MCF 10A (cell line): ENCODE measurements at regions of chr10 and their contacts with region 1.

Region 1: DNA sequence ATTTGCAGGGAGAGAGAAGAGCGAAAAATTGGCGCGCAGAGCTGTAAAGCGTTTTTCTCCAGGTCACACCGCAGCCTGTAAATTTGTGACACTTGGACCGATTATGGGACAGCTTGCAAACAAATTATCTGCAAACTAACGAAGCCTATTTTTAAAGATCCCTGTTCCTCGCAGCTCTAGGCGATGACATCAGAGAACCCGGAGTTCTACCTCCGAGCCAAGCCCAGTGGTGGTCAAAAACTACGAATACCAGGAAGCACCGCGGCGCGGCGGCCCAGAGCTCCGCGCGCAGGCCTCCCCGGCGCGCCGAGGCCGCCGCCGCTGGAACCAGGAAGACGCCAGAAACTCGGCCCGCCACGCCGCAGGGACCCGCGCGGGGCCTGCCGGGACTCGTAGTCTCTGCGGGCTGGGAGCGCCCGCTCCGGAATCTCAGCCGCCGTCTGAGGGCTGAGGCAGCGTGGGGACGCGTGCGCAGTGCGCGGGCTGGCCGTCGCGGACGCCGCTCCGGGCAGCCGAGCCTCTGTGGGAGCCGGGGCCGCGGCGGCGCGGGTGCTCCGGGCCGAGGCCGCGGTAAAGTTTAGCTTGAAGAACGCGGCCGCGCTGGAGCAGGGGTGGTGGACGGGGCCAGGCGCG is at the start of gene PLEKHA1:
- DNase-seq: peak; percentile 93
- H3K4me3 Mint-ChIP-seq: peak within 1 kb of the TSS; percentile 93
- H3K27ac Mint-ChIP-seq: peak within 1 kb of the TSS; percentile 89
- H3K4me1 Mint-ChIP-seq: peaks cover 25% of the 10 kb centered on the region
- H3K27me3 Mint-ChIP-seq: no peaks in the 10 kb centered on the region
- CTCF ChIP-seq: peak; percentile 13
- total RNA-seq, gene PLEKHA1: 55.8 and 56.7 TPM in 2 replicates

Region 2: GRCh38 chr10:122298598-122299301 is 75.6 kb before region 1 on chr10:
- CTCF ChIA-PET with region 1: interaction called, 7 read pairs
- POLR2A ChIA-PET with region 1: interaction called, 9 read pairs
- intact Hi-C with region 1: loop called (anchors 2 kb)
- DNase-seq: peak; percentile 86
- H3K4me3 Mint-ChIP-seq: no peak overlapping the region
- H3K27ac Mint-ChIP-seq: no peak overlapping the region
- H3K4me1 Mint-ChIP-seq: peaks cover 38% of the 10 kb centered on the region
- H3K27me3 Mint-ChIP-seq: no peaks in the 10 kb centered on the region
- CTCF ChIP-seq: peak; percentile 82

Region 3: GRCh38 chr10:122323941-122324675 is 50.2 kb before region 1 on chr10:
- CTCF ChIA-PET with region 1: no interaction called
- POLR2A ChIA-PET with region 1: interaction called, 36 read pairs
- intact Hi-C with region 1: no loop called
- DNase-seq: peak; percentile 91
- H3K4me3 Mint-ChIP-seq: no peak overlapping the region
- H3K27ac Mint-ChIP-seq: peak overlapping the region; percentile 90
- H3K4me1 Mint-ChIP-seq: peaks cover 14% of the 10 kb centered on the region
- H3K27me3 Mint-ChIP-seq: no peaks in the 10 kb centered on the region
- CTCF ChIP-seq: no peak

Region 4: DNA sequence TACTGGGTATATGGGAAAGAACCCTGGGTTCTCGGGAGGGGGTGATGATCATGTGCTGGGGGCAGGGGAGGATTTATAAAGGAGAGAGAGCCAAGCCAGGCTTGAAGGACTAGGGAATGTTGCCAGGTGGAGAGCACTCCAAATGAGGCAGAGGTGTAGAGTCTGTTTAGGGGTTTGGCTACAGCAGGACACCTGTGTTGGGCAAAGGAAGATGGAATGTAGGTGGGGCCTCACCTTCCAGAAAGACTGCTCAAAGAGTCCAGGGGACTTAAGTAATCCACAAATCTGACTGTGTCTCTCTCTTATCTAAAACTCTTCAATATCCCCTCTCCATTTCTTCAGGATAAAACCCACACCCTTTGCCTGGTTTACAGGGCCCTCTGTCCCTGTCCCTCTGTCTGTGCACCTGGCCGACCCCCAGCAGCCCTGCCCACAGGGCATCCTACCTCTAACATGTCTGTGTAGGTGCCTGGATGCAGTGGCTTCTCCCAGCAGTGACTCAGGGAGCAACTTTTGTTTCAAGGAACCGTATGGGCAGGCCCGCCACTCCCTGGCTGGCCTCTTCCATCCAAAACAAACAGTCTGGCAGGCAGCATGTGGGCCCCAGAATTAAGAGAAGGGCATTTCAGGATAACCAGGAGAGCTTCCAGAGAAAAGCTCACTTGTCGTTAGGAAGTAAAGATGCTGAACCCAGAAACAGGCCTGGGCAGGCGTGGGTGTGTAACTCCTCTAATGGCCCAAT is 10.5 kb before region 1 on chr10:
- CTCF ChIA-PET with region 1: interaction called, 5 read pairs
- POLR2A ChIA-PET with region 1: interaction called, 22 read pairs
- intact Hi-C with region 1: no loop called
- DNase-seq: peak; percentile 56
- H3K4me3 Mint-ChIP-seq: no peak overlapping the region
- H3K27ac Mint-ChIP-seq: peak overlapping the region; percentile 49
- H3K4me1 Mint-ChIP-seq: peaks cover 17% of the 10 kb centered on the region
- H3K27me3 Mint-ChIP-seq: no peaks in the 10 kb centered on the region
- CTCF ChIP-seq: no peak

Region 5: DNA sequence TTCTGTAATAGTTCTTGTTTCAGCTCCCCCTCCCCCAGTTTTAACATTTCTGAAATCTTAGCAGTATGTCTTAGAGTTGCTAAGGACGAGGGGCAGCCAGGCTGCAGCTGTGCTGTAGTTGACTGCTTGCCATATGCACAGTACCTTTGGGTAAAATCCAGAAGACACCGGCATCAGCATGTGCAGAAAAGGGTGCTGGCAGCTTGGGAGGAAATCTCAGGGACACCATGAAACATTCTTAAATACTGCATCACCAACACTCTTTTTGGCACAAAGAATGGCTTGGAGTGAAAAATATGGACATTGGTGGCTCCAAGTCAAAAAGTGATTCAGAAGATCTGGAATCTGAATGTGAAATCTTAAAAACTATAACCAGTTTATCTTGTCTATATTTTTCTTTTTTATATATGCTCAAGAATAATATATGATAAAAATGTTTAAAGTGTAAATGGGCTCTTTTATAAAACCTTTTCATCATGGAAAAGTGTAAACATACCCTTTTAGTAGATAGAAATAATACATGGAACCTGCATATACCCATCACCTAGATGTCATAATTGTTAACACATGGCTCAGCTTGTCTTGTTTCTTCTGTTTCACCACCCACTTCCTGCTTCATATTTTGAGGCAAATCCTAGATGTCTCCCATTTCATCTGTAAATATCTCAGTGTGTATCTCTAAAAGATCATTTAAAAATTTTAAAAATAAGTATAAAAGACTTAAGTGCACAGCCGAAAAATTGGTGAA is 45.7 kb after region 1 on chr10:
- CTCF ChIA-PET with region 1: interaction called, 3 read pairs
- POLR2A ChIA-PET with region 1: interaction called, 17 read pairs
- intact Hi-C with region 1: loop called (anchors 2 kb)
- DNase-seq: peak; percentile 81
- H3K4me3 Mint-ChIP-seq: peak overlapping the region; percentile 52
- H3K27ac Mint-ChIP-seq: peak overlapping the region; percentile 91
- H3K4me1 Mint-ChIP-seq: peaks cover 44% of the 10 kb centered on the region
- H3K27me3 Mint-ChIP-seq: no peaks in the 10 kb centered on the region
- CTCF ChIP-seq: no peak

Region 6: GRCh38 chr10:122495406-122496340 is 121.3 kb after region 1 on chr10:
- CTCF ChIA-PET with region 1: interaction called, 3 read pairs
- POLR2A ChIA-PET with region 1: interaction called, 18 read pairs
- intact Hi-C with region 1: no loop called
- DNase-seq: peak; percentile 77
- H3K4me3 Mint-ChIP-seq: peak overlapping the region; percentile 60
- H3K27ac Mint-ChIP-seq: peak overlapping the region; percentile 92
- H3K4me1 Mint-ChIP-seq: peaks cover 71% of the 10 kb centered on the region
- H3K27me3 Mint-ChIP-seq: no peaks in the 10 kb centered on the region
- CTCF ChIP-seq: no peak